GM13976 (cell line): ENCODE measurements at regions of chr16 and their contacts with region 1.

Region 1: DNA sequence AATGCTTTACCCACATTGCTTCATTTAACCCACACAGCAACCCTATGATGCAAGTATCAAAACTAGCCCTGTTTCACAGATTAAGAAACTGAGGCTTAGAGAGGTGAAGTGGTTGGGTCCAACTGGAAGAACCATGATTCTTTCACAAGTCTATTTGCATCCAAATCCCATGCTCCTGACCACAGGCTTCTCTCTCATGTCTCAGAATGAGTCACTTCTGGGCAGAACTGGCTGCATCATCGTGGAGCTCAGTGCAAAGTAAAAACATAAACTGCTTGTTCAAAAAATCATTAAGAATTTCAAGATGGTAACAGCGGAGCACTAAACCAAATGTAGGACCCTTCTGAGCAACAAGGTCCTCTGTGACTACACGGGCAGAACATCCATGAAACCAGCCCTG is 20.2 kb upstream of the CES1 start:
- DNase-seq: no peak
- CTCF ChIP-seq: no peak

Region 2: DNA sequence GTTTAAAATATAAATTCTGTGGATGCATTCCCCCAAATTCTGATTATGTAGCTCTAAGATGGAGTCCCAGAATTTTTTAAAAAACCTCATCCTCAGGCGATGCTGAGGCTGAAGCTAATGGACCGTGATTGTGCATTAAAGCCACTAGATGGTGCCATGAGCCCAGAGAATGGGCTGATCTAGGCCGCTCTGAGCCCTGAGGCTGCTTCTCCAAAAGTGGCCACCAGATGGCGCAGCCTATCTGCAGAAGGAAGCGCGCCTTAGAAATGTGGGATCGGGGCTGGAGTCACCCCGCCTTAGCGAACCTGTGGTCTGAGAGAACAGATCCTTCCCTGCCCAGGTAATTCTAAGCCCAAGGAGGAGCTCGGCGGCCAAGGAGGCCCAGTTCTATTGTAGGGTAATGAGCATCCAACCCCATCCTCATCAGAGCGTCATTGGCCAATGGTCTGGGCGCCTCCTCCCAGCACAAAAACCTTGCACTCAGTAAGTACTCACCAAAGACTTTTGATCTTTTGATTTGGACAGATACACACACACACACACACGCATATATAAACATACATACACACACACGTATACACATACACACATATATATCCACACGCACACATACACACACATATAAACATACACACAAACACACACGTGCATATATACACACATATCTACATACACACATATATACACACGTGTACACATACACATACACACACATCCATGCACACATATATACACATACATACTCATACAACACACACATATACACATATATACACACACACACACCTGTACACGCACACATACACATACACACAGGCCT is 387.8 kb before region 1 on chr16:
- in situ Hi-C with region 1: loop called (anchors 25 kb)
- DNase-seq: peak; percentile 80
- CTCF ChIP-seq: peak; percentile 99